Lower leg skin (tissue), 4 donors: ENCODE measurements at regions of chr1 and their contacts with region 1.

Region 1: GRCh38 chr1:178542560-178543356 is 29.8 kb downstream of the TEX35 start:
- DNase-seq: peak; percentile 85 to 99
- H3K4me3 ChIP-seq: peak overlapping the region; percentile 67
- CTCF ChIP-seq: peak in 2 of 3 donors; percentile 58 to 63
- POLR2A ChIP-seq: no peak

Region 2: DNA sequence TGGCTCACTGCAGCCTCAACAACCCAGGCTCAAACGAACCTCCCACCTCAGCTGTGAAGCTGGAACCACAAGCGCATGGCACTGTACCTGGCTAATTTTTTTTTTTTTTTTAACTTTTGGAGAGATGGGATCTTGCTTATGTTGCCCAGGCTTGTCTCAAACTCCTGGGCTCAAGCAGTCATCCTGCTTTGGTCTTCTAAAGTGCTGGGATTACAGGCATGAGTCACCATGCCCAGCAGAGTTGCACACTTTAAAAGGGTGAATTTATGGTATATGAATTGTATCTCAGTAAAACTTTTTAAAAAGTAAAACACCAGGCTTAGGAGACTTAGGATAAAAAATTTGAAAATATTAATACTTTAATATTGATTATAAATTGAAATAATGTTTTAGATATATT is 145.1 kb before region 1 on chr1:
- intact Hi-C with region 1: no loop called
- DNase-seq: no peak
- H3K4me3 ChIP-seq: no peak overlapping the region
- CTCF ChIP-seq: no peak
- POLR2A ChIP-seq: no peak

Region 3: GRCh38 chr1:178749581-178750166 is 206.9 kb after region 1 on chr1:
- intact Hi-C with region 1: loop called (anchors 1 kb)
- DNase-seq: no peak
- H3K4me3 ChIP-seq: no peak overlapping the region
- CTCF ChIP-seq: no peak
- POLR2A ChIP-seq: no peak